Activated CD4-positive, alpha-beta memory T cell treated with anti-CD3 and anti-CD28 coated beads for 36 hours (primary cell): ENCODE measurements at regions of chr2 and their contacts with region 1.

Region 1: DNA sequence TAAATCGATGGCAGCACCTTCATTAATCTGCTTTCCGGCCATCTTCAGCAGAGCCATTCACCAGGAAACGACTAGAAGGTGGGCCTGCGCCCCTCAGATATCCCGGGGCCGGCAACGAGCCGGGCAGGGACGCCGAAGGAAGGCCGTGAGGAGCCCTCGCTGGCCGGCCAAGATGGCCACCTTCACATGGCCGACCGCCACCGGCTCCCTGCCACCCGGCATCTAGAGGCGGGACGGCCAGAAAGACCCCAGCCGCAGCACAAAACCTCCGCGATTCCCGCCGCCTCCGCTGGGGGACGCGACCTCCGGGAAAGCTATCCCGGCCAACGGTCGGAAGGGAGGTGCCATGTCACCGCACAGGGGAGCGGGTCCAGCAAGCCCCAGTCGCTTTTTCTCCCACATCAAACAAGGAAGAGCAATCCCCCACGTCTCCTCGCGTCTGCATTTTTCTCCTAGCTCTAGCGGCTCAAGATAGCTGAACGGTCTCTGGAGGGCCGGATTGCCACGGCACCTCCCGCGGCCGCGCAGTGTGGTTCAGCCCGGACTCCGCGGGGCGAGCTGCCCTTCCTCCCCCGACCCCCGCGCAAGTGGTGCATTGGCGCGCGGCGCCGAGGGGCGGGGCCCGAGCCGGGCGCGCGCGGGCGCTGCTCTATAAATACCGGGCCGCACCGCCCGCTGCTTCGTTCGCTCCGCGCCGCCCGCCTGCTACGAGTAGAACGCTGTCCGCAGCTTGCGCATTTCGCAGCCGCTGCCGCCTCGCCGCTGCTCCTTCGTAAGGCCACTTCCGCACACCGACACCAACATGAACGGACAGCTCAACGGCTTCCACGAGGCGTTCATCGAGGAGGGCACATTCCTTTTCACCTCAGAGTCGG is at the start of gene MAT2A:
- DNase-seq: peak; percentile 93
- H3K4me3 Mint-ChIP-seq: peak within 1 kb of the TSS; percentile 92
- H3K27ac Mint-ChIP-seq: peak within 1 kb of the TSS; percentile 99
- H3K4me1 Mint-ChIP-seq: peaks cover 45% of the 10 kb centered on the region
- H3K27me3 Mint-ChIP-seq: no peaks in the 10 kb centered on the region
- total RNA-seq, gene MAT2A: 196 to 208 TPM

Region 2: DNA sequence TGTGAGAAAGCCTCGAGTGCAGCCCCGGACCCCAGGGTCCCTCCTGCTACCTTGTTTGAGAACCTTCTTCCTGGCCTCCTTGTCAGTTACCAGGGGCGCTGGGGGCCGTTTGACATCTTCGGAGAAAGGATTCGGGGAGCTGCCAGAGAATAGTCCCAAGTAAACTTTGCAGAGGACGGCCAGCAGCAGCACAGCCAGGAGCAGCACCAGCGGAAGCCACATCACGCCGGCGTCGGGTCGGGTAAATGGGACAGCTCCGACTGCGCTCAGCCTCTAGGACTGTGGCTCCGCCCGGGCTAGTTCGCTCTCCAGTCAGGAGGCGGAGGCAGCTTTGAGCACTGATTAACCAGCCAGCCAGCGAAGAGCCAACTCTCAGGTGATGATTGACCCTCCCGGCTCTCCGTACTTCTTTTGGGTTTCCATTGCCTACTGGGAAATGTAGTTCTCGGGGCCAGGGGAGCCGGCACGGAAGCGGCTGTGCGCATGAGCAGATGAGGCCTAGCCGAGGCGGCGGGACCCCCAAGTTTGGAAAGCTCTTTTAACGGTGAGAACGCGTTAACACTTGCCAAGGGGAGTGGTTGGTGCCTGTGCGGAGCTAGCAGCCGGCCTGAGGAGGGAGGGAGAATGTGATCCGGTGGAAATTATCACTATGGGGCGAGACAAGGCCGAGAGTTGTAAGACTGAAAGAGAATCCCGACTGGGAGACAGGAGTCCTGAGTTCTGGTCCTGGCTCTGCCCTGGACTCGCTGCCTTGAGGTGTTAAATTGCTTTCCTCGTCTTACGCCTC is 184.2 kb before region 1 on chr2 and contains the starts of genes ELMOD3 and RETSAT:
- CTCF ChIA-PET with region 1: no interaction called
- POLR2A ChIA-PET with region 1: interaction called, 28 read pairs
- intact Hi-C with region 1: loop called (anchors 1 kb)
- DNase-seq: peak; percentile 98
- H3K4me3 Mint-ChIP-seq: peak within 1 kb of the TSS; percentile 100
- H3K27ac Mint-ChIP-seq: peak within 1 kb of the TSS; percentile 95
- H3K4me1 Mint-ChIP-seq: peaks cover 41% of the 10 kb centered on the region
- H3K27me3 Mint-ChIP-seq: no peaks in the 10 kb centered on the region
- total RNA-seq, gene ELMOD3: 11.1 to 15.0 TPM
- total RNA-seq, gene RETSAT: 22.6 to 22.8 TPM

Region 3: DNA sequence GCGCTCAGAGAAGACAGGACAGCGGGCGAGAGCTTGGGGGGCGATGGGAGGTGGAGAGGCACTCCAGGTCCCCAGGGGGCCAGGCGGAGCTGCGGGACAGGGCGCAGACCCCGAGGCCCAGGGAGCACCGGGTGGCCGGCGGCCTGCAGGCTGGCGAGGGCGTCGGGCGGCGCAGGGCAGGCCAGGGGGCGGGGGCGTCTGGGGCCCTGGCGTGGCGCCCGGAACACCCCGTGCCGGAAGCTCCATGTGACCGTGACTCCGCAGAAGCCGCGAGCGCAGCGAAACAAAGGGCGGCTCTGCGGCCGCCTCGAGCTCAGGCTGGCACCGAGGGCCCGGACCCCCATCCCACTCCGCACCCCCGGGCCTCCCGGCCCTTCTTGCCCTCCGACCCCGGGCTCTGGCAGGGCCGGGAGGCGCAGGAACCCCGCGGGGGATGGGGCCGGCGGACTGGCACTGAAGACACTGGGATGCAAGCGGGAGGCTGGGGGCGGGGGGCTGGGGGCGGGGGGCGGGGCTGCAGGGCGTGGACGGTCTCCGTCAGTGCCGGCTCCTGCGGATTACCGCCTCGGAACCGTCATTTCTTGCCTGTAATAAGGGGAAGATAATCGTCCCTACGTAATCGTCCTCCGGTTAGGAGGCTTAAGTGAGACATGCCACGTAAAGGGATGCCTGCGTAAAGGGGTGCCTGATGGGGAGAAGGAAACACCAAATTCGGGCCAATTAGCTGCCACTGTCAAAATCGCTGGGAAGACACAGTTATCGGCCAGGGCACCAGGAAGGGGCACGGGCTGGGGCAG is 101.0 kb before region 1 on chr2:
- CTCF ChIA-PET with region 1: interaction called, 11 read pairs
- POLR2A ChIA-PET with region 1: interaction called, 80 read pairs
- intact Hi-C with region 1: loop called (anchors 1 kb)
- DNase-seq: peak; percentile 86
- H3K4me3 Mint-ChIP-seq: peak overlapping the region; percentile 81
- H3K27ac Mint-ChIP-seq: peak overlapping the region; percentile 98
- H3K4me1 Mint-ChIP-seq: peaks cover 27% of the 10 kb centered on the region
- H3K27me3 Mint-ChIP-seq: no peaks in the 10 kb centered on the region

Region 4: DNA sequence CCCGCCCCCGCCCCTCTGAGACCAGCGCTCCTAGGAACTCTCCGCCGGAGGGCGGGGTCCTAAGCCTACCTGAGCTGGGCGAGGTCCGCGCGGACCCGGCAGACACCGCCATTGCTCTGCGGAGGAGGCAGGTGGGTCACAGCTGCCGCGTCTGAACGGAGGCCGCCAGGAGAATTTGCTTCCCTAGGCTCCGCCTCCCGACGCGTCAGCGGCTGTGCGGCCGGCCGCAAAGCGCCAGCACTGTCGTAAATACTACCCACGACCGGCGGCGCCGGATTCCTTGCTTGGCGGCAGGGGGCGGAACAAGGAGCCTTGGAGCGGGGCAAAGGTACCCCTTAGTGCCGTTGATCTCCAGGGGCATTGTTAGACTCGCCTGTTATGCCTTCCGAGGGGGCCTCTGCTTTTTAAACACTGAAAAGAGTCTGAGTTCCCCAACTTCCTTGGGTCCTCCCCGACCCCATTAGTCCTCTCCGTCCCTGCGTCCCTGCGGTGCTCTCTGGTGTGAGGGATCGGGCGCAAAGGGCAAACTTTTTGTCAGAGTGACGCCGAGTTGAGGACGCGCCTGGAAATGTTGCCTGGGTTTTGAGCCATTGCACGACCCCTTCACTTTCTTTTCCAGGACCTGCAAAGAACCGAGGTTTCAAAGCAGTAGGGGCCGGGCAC is 22.7 kb after region 1 on chr2 and contains the start of gene GGCX:
- CTCF ChIA-PET with region 1: interaction called, 3 read pairs
- POLR2A ChIA-PET with region 1: interaction called, 30 read pairs
- intact Hi-C with region 1: loop called (anchors 2 kb)
- DNase-seq: peak; percentile 98
- H3K4me3 Mint-ChIP-seq: peak within 1 kb of the TSS; percentile 92
- H3K27ac Mint-ChIP-seq: peak within 1 kb of the TSS; percentile 83
- H3K4me1 Mint-ChIP-seq: peaks cover 37% of the 10 kb centered on the region
- H3K27me3 Mint-ChIP-seq: no peaks in the 10 kb centered on the region
- total RNA-seq, gene GGCX: 24.2 to 25.2 TPM

Region 5: GRCh38 chr2:85611705-85612587 is 73.2 kb after region 1 on chr2 and contains the start of gene C2orf68:
- CTCF ChIA-PET with region 1: no interaction called
- POLR2A ChIA-PET with region 1: interaction called, 11 read pairs
- intact Hi-C with region 1: loop called (anchors 1 kb)
- DNase-seq: peak; percentile 94
- H3K4me3 Mint-ChIP-seq: peak within 1 kb of the TSS; percentile 95
- H3K27ac Mint-ChIP-seq: peak within 1 kb of the TSS; percentile 91
- H3K4me1 Mint-ChIP-seq: peaks cover 29% of the 10 kb centered on the region
- H3K27me3 Mint-ChIP-seq: no peaks in the 10 kb centered on the region
- total RNA-seq, gene C2orf68: 36.3 to 39.1 TPM

Region 6: DNA sequence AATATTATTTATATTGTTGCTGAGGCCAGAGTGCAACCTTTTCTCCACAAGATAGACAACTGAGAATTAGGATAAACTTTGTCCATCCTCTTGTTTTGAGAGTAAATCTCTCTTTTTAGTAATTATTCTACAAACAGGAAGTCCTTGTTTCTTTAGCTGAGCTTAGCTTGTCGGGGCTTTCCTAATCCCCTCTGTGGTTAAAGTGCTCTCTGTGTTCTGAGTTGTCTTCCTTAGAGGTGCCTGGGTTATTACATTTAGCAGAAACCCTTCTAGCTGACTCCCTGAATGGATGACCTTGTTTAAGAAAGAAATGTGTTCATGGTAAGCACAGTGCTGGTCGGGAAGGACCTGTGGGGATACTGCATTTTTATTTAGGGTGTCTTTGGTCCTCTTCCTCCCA is 89.9 kb after region 1 on chr2:
- CTCF ChIA-PET with region 1: no interaction called
- POLR2A ChIA-PET with region 1: no interaction called
- intact Hi-C with region 1: no loop called
- DNase-seq: no peak
- H3K4me3 Mint-ChIP-seq: no peak overlapping the region
- H3K27ac Mint-ChIP-seq: peak overlapping the region; percentile 54
- H3K4me1 Mint-ChIP-seq: peaks cover 8% of the 10 kb centered on the region
- H3K27me3 Mint-ChIP-seq: no peaks in the 10 kb centered on the region